Dorsolateral prefrontal cortex (tissue), 120 donors: ENCODE measurements at regions of chr10 and their contacts with region 1.

Region 1: DNA sequence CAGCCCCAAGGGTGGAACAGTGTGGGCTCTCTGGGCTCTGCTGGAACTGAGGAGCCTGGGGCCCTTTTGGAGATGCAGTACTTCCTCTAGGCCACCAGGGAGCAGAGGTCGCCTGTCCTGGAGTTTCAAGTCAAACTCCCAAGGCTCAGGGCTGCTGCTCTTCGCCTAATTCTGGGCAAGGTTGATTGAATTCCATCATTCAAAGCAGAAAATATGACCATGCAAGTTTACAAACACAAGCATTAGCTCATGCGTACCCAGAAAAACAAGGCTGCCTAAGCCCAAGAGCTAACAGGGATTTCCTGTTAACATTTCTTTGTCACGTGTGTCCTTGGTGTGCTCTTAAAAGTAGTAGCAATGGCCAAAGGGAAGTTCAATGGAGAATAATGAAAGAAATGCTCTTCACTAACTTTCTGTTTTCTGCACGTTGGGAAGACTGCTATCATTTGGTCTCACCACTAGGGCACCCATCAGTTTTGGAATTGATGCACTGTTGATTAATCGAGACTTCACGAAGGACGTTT is 20.1 kb downstream of the LDB3 start:
- DNase-seq: peak in 5 of 10 donors; percentile 48 to 70 (median 56)
- H3K4me3 ChIP-seq: no peak overlapping the region
- H3K27ac ChIP-seq: peak overlapping the region in 14 of 59 donors; percentile 7 to 58 (median 28)
- H3K27me3 ChIP-seq: no peaks in the 10 kb centered on the region
- CTCF ChIP-seq: peak; percentile 48 to 91 (median 82)

Region 2: GRCh38 chr10:86217371-86218080 is 470.9 kb before region 1 on chr10:
- intact Hi-C with region 1: no loop called
- DNase-seq: peak in 2 of 10 donors; percentile 16 to 52
- H3K4me3 ChIP-seq: no peak overlapping the region
- H3K27ac ChIP-seq: peak overlapping the region in 14 of 59 donors; percentile 3 to 51 (median 28)
- H3K27me3 ChIP-seq: no peaks in the 10 kb centered on the region
- CTCF ChIP-seq: no peak

Region 3: GRCh38 chr10:86439544-86439943 is 248.9 kb before region 1 on chr10:
- intact Hi-C with region 1: no loop called
- DNase-seq: peak in 6 of 10 donors; percentile 9 to 56 (median 43)
- H3K4me3 ChIP-seq: no peak overlapping the region
- H3K27ac ChIP-seq: peak overlapping the region in 39 of 59 donors; percentile 0 to 63 (median 30)
- H3K27me3 ChIP-seq: no peaks in the 10 kb centered on the region
- CTCF ChIP-seq: no peak

Region 4: DNA sequence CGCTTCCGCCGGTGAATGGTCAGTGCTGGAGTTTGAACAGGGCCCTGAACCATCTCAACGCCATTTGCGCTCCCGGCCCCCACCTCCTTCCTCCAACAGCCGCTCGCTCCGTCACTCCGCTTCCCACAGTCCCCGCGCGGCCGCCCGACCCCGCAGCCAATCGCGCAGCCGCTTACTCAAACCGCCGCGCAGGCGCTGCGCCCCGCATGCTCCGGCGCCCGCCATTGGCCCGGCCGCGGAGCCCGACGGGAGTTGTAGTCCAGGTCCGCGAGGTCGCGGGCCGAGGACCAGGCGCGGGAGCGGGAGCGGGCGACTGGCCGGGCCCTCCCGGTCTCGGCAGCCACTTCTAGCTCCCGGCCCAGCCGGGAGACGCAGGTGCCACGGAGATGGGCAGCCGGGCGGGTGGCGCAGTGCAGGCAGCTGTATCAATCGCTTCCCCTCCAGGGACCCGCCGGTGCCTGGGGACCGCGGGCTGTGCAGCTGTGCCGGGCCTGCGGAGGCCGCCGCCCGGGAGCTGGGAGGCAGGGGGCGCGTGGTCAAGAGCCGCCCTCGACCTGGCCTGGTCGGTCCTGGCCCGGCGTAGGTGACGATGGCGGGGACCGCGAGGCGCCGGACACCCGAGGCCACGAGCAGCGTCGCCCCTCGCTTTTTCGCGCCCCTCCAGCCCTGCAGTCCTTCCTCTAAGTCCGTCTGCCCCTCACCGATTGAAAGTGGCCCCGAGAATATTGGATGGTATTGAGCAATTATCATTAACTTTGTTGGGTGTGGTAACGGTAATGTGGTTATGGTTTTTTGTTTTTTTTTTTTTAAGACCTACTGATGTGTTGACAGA is 166.6 kb before region 1 on chr10 and contains the start of gene WAPL:
- intact Hi-C with region 1: loop called in 1 of 2 experiments (anchors 10 kb)
- DNase-seq: peak; percentile 87 to 98 (median 94)
- H3K4me3 ChIP-seq: peak within 1 kb of the TSS; percentile 68 to 100 (median 96)
- H3K27ac ChIP-seq: peak within 1 kb of the TSS; percentile 62 to 97 (median 91)
- H3K27me3 ChIP-seq: no peaks in the 10 kb centered on the region
- CTCF ChIP-seq: peak in 27 of 56 donors; percentile 4 to 61 (median 25)
- total RNA-seq, gene WAPL: 25.8 to 40.0 (median 32.6) TPM

Region 5: DNA sequence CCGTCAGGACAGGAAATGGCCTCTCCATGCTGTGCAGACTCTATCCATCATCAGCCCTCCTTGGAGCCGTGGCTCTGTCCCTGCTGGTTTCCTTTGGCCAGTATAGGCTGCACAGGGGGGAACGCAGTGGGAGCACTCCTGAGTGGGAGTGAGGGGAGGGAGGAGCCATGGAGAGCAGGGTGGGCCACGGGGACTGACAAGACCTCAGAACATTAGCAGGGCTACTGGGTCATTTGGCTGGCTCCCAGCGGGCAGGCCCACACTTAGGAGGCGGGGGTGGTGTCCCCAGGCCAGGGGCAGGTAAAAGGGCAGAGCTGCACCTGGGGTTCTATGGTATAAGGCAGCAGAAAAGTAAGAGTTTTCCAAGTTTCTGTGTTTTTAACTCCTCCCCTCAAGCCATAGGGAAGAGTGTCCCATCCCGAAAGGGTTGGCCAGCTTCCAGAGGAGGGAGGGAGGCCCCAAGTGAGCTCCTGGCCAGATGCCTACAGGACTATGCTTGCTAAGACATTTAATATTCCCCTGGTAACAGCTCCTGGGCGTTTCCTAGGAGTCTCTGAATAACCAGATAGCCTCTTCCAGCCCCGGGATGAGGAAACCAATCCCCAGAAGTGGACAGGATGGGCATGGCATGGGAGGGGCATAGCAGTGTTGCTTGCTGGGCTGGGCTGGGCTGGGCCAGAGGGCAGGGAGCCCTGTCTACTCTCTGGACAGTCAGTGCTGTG is 39.6 kb before region 1 on chr10:
- intact Hi-C with region 1: loop called (anchors 5 kb)
- DNase-seq: peak in 4 of 10 donors; percentile 21 to 38 (median 30)
- H3K4me3 ChIP-seq: no peak overlapping the region
- H3K27ac ChIP-seq: no peak overlapping the region
- H3K27me3 ChIP-seq: peaks cover 0 to 3% (median 0%) of the 10 kb centered on the region in 45 donors
- CTCF ChIP-seq: no peak